GM18951 (cell line): ENCODE measurements at regions of chr4 and their contacts with region 1.

Region 1: GRCh38 chr4:86934771-86935565 is at the start of gene AFF1:
- POLR2A ChIP-seq: peak; percentile 95

Region 2: GRCh38 chr4:87006676-87007527 is 71.9 kb after region 1 on chr4:
- in situ Hi-C with region 1: loop called (anchors 5 kb)
- POLR2A ChIP-seq: peak; percentile 100